ENCODE measurements at regions of chr5 and their contacts with region 1.

Region 1: GRCh38 chr5:77867194-77867691 is 91.1 kb upstream of the TBCA start:
- DNase-seq: no peak

Region 2: GRCh38 chr5:78008356-78008967 is 141.2 kb after region 1 on chr5:
- intact Hi-C with region 1: loop called (anchors 5 kb)
- DNase-seq: peak in 31 of 42 donors; percentile 24 to 86 (median 68)

Measured in head of caudate nucleus (tissue), 42 donors.